ENCODE measurements at regions of chr7 and their contacts with region 1.

Region 1: DNA sequence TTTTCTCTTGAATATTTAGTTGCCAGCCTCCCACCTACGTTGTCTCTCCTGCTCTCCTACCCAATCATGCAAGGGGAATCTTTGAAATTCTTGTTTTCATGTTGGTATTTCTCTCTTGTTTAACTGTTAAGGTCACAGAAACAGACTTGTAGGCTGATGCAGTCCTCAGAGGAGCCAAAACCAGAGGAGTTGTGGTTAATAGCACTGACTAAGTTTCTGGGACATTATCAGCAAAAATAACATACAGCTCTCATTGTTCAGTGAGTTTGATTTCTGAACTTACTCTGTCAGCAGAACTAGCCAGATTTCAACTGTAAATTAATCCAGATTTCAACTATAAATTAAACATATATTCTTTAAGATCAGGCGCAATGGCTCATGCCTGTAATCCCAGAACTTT is 11.1 kb upstream of the CUL1 start:
- DNase-seq: no peak
- H3K4me3 ChIP-seq: no peak overlapping the region
- H3K27ac ChIP-seq: no peak overlapping the region
- H3K4me1 ChIP-seq: no peaks in the 10 kb centered on the region
- H3K27me3 ChIP-seq: no peaks in the 10 kb centered on the region
- CTCF ChIP-seq: no peak
- EP300 ChIP-seq: no peak
- POLR2A ChIP-seq: no peak

Region 2: DNA sequence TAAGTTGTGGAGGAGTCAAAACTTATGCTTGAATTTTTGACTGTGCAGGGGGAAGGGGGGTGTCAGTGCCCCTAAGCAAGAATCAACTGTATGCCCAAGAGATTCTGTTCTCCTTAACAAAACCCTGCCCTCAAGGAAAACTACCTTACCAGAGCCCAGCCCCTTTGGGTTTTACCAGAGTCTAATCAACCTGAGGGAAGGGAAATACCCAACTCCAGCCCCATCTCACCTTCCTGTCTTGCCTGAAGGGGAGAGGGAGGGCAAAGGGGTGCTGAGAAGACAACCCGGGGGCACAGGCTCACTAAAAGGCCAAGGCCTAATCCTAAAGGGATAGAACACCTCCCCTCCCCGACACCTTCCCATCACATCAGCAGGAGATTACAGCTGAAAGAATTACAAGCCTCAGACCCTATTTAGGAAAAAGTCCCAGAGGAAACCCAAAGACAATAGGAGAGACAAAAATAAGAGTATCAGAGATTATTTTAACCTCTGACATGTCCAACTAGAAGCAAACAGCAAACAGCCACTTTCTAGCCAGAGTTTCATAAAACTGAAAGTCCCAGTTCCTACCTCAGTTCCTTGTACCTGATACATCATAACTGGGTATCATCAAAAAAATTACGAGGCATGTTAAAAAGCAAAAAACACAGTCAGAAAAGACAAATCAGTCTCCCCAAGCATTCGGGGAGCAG is 123.8 kb before region 1 on chr7:
- intact Hi-C with region 1: loop called in 1 of 4 experiments (anchors 10 kb)
- DNase-seq: no peak
- H3K4me3 ChIP-seq: no peak overlapping the region
- H3K27ac ChIP-seq: no peak overlapping the region
- H3K4me1 ChIP-seq: no peaks in the 10 kb centered on the region
- H3K27me3 ChIP-seq: no peaks in the 10 kb centered on the region
- CTCF ChIP-seq: no peak
- EP300 ChIP-seq: no peak
- POLR2A ChIP-seq: no peak

Region 3: GRCh38 chr7:148940702-148941597 is 253.4 kb after region 1 on chr7:
- intact Hi-C with region 1: no loop called
- DNase-seq: peak; percentile 79 to 85 (median 82)
- H3K4me3 ChIP-seq: peak overlapping the region; percentile 80
- H3K27ac ChIP-seq: peak overlapping the region; percentile 87 to 89
- H3K4me1 ChIP-seq: no peaks in the 10 kb centered on the region
- H3K27me3 ChIP-seq: no peaks in the 10 kb centered on the region
- CTCF ChIP-seq: no peak
- EP300 ChIP-seq: no peak
- POLR2A ChIP-seq: peak; percentile 50